ENCODE measurements at regions of chrX and their contacts with region 1.

Region 1: DNA sequence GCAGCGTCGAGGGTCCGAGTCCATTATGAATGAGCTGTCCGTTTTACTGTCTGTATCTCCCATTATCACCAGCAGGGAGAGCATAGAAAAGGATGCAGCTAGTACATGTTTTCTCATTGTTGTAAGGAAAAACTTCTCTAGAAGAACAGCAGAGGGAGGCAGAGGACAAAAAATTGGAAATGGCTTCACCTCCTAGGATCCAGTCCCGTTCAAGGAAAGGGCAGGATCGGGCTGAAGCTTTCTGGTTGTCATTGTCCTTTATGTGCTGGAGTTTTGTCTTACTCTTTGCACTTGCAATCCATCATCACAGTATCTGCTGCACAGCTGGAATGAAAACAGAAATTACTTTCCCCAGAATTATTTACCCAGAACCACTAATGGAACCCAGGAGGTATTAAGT is 14.7 kb downstream of the NDP start:
- DNase-seq: peak; percentile 54 to 71 (median 65)
- H3K4me3 ChIP-seq: no peak overlapping the region
- H3K4me3 Mint-ChIP-seq: no peak overlapping the region
- H3K27ac ChIP-seq: no peak overlapping the region
- H3K27ac Mint-ChIP-seq: peak overlapping the region in 2 of 7 donors; percentile 44 to 54
- H3K4me1 ChIP-seq: no peaks in the 10 kb centered on the region
- H3K4me1 Mint-ChIP-seq: peaks cover 3% of the 10 kb centered on the region
- H3K27me3 ChIP-seq: peaks cover 0 to 11% of the 10 kb centered on the region in 2 donors
- H3K27me3 Mint-ChIP-seq: peaks cover 4 to 16% (median 7%) of the 10 kb centered on the region in 3 donors
- CTCF ChIP-seq: peak; percentile 72

Region 2: GRCh38 chrX:44244008-44244407 is 285.5 kb after region 1 on chrX:
- intact Hi-C with region 1: loop called (anchors 2 to 5 kb)
- DNase-seq: peak in 2 of 3 donors; percentile 4 to 12
- H3K4me3 ChIP-seq: no peak overlapping the region
- H3K4me3 Mint-ChIP-seq: no peak overlapping the region
- H3K27ac ChIP-seq: no peak overlapping the region
- H3K27ac Mint-ChIP-seq: no peak overlapping the region
- H3K4me1 ChIP-seq: peaks cover 0 to 6% of the 10 kb centered on the region in 2 donors
- H3K4me1 Mint-ChIP-seq: peaks cover 14% of the 10 kb centered on the region
- H3K27me3 ChIP-seq: peaks cover 29 to 56% of the 10 kb centered on the region in 2 donors
- H3K27me3 Mint-ChIP-seq: peaks cover 14 to 26% (median 24%) of the 10 kb centered on the region in 3 donors
- CTCF ChIP-seq: peak; percentile 50